Posterior cingulate gyrus (tissue), 11 donors: ENCODE measurements at regions of chr1 and their contacts with region 1.

Region 1: GRCh38 chr1:227734856-227735538 is at the starts of genes JMJD4 and SNAP47:
- DNase-seq: peak; percentile 84 to 98 (median 88)

Region 2: DNA sequence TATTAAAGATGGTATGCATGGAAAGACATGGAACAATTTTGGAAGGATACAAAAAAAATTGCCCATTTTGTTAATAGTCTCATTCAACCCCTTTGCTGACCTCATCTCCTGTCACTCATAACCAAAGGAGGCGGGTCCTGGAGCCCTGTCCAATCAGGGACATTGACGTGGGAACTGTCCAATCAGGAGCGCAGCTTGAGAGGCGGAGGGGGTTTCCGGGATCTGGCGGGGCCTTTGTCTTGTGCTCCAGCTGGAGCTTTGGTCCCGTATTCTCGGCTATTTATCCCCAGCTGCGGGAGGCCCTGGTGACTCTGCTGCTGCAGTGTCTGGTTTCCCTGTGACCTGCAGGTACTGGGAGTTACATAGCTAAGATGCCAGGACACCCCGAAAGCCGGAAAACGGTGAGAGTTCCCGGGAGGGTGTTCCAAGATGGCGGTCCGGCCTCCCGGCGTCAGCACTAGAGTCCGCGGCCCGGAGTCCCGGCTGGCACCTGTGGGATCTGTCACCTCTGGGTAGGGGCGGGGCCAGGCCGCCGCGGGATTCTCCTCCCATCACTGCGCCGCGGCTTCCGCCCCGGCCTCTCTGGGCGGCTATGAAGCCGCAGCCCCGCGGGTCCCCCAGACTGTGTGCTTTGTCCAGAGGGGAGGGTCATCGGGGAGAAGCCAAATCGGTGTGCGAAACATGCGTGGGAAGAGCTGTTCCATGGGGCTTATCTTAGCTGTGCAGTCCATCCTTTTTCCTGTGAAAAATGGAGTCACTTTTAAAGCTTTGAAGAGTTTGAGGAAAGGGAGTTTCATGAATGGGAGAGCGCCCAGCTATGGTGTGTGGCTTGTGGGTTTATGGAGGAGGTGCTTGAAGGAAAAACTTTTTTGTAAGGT is 171.4 kb before region 1 on chr1 and contains the start of gene ZNF678:
- intact Hi-C with region 1: loop called (anchors 10 kb)
- DNase-seq: peak; percentile 86 to 99 (median 92)